ENCODE measurements at regions of chr4 and their contacts with region 1.

Region 1: GRCh38 chr4:22410645-22411247 is 105.1 kb downstream of the ADGRA3 start:
- DNase-seq: no peak
- ATAC-seq: no peak
- H3K4me3 ChIP-seq: no peak overlapping the region
- H3K27ac ChIP-seq: no peak overlapping the region
- H3K4me1 ChIP-seq: no peaks in the 10 kb centered on the region
- H3K27me3 ChIP-seq: no peaks in the 10 kb centered on the region
- CTCF ChIP-seq: peak in 3 of 4 donors; percentile 10 to 41 (median 39)

Region 2: DNA sequence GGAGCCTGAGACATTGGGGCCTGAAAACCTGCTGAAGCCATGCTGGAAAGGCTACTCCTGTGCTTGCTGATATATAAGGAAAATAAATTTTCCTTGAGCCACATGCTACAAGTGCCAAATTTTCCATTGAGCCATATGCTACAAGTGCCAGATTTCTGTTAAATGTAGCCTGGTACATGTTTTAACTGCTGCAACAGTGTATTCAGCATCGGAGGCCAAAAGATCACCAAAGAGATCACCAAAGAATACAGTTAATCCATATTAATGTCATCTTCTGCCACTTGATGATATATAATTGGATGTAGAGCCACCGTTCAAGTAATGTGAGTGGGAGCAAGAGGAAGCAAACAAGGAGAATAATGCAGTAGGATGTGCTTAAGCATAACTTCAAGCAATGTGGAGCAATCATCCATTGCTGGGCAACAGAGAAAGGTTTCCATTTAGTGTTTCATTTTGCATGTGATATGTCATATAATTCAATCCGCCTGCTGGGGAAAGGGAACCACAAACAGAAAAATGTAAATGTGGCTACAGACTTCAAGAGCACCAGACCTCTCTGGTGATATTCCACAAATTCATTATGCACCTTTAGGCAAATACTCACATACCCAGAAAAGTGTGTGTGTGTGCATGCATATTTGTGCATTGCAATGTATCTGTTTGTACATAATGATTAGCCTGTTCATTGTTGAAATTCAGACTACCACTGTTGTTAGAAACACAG is 758.1 kb before region 1 on chr4:
- intact Hi-C with region 1: no loop called
- DNase-seq: no peak
- ATAC-seq: peak in 2 of 4 donors; percentile 30 to 55
- H3K4me3 ChIP-seq: no peak overlapping the region
- H3K27ac ChIP-seq: no peak overlapping the region
- H3K4me1 ChIP-seq: peaks cover 0 to 6% (median 0%) of the 10 kb centered on the region in 3 donors
- H3K27me3 ChIP-seq: no peaks in the 10 kb centered on the region
- CTCF ChIP-seq: no peak

Region 3: GRCh38 chr4:21869978-21870745 is 540.6 kb before region 1 on chr4:
- intact Hi-C with region 1: no loop called
- DNase-seq: no peak
- ATAC-seq: no peak
- H3K4me3 ChIP-seq: no peak overlapping the region
- H3K27ac ChIP-seq: no peak overlapping the region
- H3K4me1 ChIP-seq: no peaks in the 10 kb centered on the region
- H3K27me3 ChIP-seq: no peaks in the 10 kb centered on the region
- CTCF ChIP-seq: no peak

Region 4: GRCh38 chr4:22167201-22167600 is 243.5 kb before region 1 on chr4:
- intact Hi-C with region 1: no loop called
- DNase-seq: no peak
- ATAC-seq: no peak
- H3K4me3 ChIP-seq: no peak overlapping the region
- H3K27ac ChIP-seq: no peak overlapping the region
- H3K4me1 ChIP-seq: no peaks in the 10 kb centered on the region
- H3K27me3 ChIP-seq: no peaks in the 10 kb centered on the region
- CTCF ChIP-seq: no peak

Region 5: DNA sequence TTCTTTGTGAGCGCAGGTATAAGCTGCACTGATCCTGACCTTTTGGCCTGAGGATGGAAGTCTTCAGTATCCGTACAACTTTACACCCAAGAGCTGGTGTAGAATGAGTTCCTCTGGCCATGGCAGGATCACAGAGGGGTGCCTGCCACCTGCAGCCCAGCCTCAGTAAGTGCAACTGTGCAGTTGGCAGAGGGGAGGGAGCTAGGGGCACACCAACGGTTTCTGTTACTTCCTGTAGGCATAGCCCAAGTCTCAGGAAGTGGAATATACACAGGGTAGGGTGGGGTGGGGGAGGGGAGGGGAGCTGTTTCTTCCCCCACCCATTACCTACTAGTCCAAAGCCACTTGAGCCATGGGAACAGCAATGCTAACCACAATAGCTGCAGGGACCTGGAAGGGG is 196.6 kb after region 1 on chr4:
- intact Hi-C with region 1: loop called in 2 of 3 experiments (anchors 10 kb)
- DNase-seq: peak; percentile 33 to 82 (median 64)
- ATAC-seq: peak; percentile 97 to 100 (median 100)
- H3K4me3 ChIP-seq: no peak overlapping the region
- H3K27ac ChIP-seq: no peak overlapping the region
- H3K4me1 ChIP-seq: no peaks in the 10 kb centered on the region
- H3K27me3 ChIP-seq: no peaks in the 10 kb centered on the region
- CTCF ChIP-seq: peak; percentile 17 to 57 (median 43)

Region 6: GRCh38 chr4:22614114-22614513 is 203.4 kb after region 1 on chr4:
- intact Hi-C with region 1: loop called in 2 of 3 experiments (anchors 10 kb)
- DNase-seq: no peak
- ATAC-seq: peak in 1 of 4 donors; percentile 21
- H3K4me3 ChIP-seq: no peak overlapping the region
- H3K27ac ChIP-seq: no peak overlapping the region
- H3K4me1 ChIP-seq: no peaks in the 10 kb centered on the region
- H3K27me3 ChIP-seq: no peaks in the 10 kb centered on the region
- CTCF ChIP-seq: no peak

Region 7: GRCh38 chr4:22688236-22688635 is 277.5 kb after region 1 on chr4:
- intact Hi-C with region 1: loop called in 1 of 3 experiments (anchors 5 kb)
- DNase-seq: no peak
- ATAC-seq: no peak
- H3K4me3 ChIP-seq: no peak overlapping the region
- H3K27ac ChIP-seq: no peak overlapping the region
- H3K4me1 ChIP-seq: no peaks in the 10 kb centered on the region
- H3K27me3 ChIP-seq: no peaks in the 10 kb centered on the region
- CTCF ChIP-seq: no peak

Region 8: DNA sequence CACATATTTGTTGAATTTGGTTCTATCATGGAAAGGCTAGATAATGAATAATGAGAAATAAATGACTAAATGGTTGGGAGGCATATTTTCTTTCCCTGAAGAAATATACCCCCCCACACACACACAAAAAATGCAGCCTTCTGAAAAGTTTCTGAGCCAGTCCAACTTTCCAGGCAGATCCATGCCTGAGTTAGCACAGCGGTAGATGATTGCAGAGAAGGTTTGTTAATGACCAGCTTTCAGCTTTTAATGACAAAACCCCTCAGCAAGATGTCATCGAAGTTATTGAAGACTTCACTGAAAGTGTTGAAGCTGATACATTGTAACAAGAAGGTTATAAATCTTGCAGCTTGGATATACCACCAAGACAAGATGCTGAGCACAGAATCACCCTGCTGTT is 343.4 kb after region 1 on chr4:
- intact Hi-C with region 1: no loop called
- DNase-seq: no peak
- ATAC-seq: no peak
- H3K4me3 ChIP-seq: no peak overlapping the region
- H3K27ac ChIP-seq: no peak overlapping the region
- H3K4me1 ChIP-seq: no peaks in the 10 kb centered on the region
- H3K27me3 ChIP-seq: no peaks in the 10 kb centered on the region
- CTCF ChIP-seq: no peak

Measured in pancreas (tissue), 10 donors.